A549 (cell line): ENCODE measurements at regions of chr6 and their contacts with region 1.

Region 1: DNA sequence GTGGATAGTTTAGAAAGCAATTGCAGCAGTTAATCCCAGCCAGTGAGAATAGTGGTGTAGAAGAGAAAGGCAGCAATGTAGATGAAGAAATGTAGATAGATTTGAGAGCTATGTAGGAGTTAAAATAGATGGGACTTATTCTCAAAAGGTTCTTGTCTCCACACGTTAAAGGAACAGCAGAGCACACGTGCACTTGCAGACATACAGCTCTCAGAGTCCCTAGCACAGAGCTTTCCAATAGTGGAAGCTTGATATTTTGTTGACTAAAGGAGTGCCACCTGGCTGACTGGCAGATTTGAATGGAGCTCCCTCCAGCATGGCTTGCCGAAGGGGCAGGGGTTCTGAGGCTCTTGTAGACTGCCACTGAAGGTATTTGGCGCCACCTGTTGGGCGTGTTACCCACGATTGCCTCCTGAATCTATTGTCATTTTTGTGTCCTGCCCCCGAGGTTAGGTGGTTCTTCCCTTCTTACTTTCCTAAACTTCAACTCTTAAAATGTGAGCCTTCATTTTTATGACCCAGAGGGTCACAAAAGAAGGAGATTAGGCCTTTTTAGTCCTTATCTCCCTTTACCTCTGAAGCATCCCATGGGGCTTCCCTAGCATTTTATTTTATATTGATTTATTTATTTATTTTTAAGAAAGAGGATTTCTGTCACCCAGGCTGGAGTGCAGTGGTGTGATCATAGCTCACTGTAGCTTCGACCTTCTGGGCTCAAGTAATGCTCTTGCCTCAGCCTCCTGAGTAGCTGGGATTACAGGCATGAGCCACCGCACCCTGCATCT is 16.4 kb downstream of the BRD2 start:
- DNase-seq: peak; percentile 52 to 86
- ATAC-seq: peak; percentile 75 to 83
- H3K4me3 ChIP-seq: no peak overlapping the region
- H3K27ac ChIP-seq: no peak overlapping the region
- H3K4me1 ChIP-seq: peaks cover 11% of the 10 kb centered on the region
- CTCF ChIP-seq: peak; percentile 87
- EP300 ChIP-seq: no peak
- POLR2A ChIP-seq: no peak
- RAD21 ChIP-seq: peak; percentile 84 to 85

Region 2: DNA sequence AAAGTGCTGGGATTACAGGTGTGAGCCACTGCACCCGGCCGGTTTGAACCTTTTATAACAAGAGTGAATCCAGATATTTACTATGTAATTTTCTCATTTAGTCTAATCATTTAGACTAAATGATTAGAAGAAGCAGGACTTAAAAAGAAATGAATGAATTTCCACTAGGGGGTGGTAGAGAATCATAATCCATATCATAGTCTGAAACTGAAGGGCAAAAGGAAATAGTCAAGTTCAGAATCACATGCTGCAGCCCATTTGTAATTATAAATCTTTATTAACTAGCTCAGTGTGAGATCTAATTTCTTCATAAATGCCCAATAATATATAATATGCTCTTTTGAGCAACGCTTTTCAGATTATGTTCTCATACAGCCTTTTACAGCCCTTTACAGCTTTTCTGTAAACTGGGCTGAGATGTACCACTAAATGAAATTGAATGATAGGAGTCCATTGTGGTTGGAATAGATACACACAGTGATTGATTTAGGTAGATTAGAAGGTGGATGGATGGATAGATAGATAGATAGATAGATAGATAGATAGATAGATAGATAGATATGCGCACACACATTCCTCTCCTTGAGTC is 99.0 kb before region 1 on chr6:
- CTCF ChIA-PET with region 1: interaction called, 37 read pairs
- POLR2A ChIA-PET with region 1: no interaction called
- DNase-seq: peak; percentile 39 to 66
- ATAC-seq: peak in 1 of 2 experiments; percentile 76; a peak in 3 of 6 replicates
- H3K4me3 ChIP-seq: no peak overlapping the region
- H3K27ac ChIP-seq: 0 out of 6 replicates have a peak overlapping the region, but pooled peaks of 1 of the 2 experiments have one; percentile 5
- H3K4me1 ChIP-seq: peaks cover 16% of the 10 kb centered on the region
- CTCF ChIP-seq: peak; percentile 66
- EP300 ChIP-seq: no peak
- POLR2A ChIP-seq: no peak
- RAD21 ChIP-seq: peak; percentile 80 to 82

Region 3: DNA sequence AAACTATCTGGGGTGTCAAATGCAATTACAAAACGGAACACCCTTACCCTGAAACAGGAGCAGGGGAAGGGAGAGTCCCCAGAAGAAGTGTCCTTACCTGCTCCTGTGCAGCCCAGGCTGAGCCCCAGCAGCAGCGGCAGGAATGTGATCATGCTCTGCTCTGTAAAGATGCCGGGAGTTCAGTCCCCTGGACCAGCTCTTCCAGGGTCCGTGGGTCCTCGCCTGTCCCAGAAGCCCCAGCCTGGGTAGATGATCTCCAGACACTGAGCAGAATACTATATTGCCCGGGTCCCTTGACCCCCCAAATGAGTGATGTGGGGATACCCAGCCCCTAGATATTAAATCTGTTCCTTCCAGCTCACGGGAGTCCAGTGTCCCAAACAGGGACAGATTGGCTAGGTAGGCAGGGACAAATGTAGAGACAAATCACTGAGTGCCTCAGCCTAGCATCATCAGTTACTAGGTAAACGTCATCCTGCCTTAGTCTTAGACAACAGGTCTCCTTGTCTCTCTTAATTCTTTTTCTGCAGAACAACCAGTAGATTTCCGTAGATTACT is 44.1 kb before region 1 on chr6 and contains the start of gene HLA-DMB:
- CTCF ChIA-PET with region 1: interaction called, 124 read pairs
- POLR2A ChIA-PET with region 1: no interaction called
- DNase-seq: peak; percentile 79 to 87
- ATAC-seq: peak; percentile 100
- H3K4me3 ChIP-seq: peak within 1 kb of the TSS; percentile 44
- H3K27ac ChIP-seq: peak within 1 kb of the TSS; percentile 35 to 73; a peak in 3 of 6 replicates
- H3K4me1 ChIP-seq: no peaks in the 10 kb centered on the region
- CTCF ChIP-seq: no peak
- EP300 ChIP-seq: no peak
- POLR2A ChIP-seq: no peak
- RAD21 ChIP-seq: no peak
- polyA plus RNA-seq, gene HLA-DMB: 14.3 and 21.6 TPM in 2 replicates

Region 4: GRCh38 chr6:32952817-32953739 is 31.7 kb before region 1 on chr6 and contains the start of gene HLA-DMA:
- CTCF ChIA-PET with region 1: interaction called, 40 read pairs
- POLR2A ChIA-PET with region 1: no interaction called
- DNase-seq: peak; percentile 49 to 93
- ATAC-seq: peak; percentile 88 to 99
- H3K4me3 ChIP-seq: no peak within 1 kb of the TSS
- H3K27ac ChIP-seq: no peak within 1 kb of the TSS
- H3K4me1 ChIP-seq: peaks cover 5% of the 10 kb centered on the region; the same call in 1 of the 3 replicates
- CTCF ChIP-seq: peak; percentile 50
- EP300 ChIP-seq: no peak
- POLR2A ChIP-seq: no peak
- RAD21 ChIP-seq: peak; percentile 24 to 28; a peak in 2 of 5 replicates
- polyA plus RNA-seq, gene HLA-DMA: 5.6 and 7.0 TPM in 2 replicates

Region 5: DNA sequence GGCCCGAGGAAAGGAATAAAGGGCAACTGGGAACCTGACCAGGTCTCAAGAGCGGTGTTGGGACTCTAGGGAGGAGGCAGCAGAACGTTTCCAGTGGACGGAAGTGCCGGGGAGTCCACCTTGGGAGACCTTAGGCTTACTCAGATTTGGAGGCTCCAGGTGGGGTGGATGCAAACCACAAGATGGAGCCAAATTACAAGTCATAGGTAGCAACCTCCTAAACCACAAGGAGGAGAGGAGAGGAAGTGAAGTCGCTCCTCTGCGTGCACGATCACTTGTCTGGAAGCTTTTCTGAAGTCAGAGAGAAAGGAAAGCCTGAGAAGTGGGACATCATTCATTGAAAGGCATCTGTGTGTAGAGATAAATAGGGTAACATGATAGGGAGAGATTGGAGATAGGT is 15.3 kb after region 1 on chr6:
- CTCF ChIA-PET with region 1: interaction called, 12 read pairs
- POLR2A ChIA-PET with region 1: no interaction called
- DNase-seq: peak in 1 of 2 experiments; percentile 46
- ATAC-seq: peak; percentile 71 to 72; a peak in 4 of 6 replicates
- H3K4me3 ChIP-seq: no peak overlapping the region
- H3K27ac ChIP-seq: no peak overlapping the region
- H3K4me1 ChIP-seq: no peaks in the 10 kb centered on the region
- CTCF ChIP-seq: peak; percentile 12; the same call in 1 of the 3 replicates
- EP300 ChIP-seq: no peak
- POLR2A ChIP-seq: no peak
- RAD21 ChIP-seq: peak; percentile 30 to 36; a peak in 3 of 5 replicates

Region 6: DNA sequence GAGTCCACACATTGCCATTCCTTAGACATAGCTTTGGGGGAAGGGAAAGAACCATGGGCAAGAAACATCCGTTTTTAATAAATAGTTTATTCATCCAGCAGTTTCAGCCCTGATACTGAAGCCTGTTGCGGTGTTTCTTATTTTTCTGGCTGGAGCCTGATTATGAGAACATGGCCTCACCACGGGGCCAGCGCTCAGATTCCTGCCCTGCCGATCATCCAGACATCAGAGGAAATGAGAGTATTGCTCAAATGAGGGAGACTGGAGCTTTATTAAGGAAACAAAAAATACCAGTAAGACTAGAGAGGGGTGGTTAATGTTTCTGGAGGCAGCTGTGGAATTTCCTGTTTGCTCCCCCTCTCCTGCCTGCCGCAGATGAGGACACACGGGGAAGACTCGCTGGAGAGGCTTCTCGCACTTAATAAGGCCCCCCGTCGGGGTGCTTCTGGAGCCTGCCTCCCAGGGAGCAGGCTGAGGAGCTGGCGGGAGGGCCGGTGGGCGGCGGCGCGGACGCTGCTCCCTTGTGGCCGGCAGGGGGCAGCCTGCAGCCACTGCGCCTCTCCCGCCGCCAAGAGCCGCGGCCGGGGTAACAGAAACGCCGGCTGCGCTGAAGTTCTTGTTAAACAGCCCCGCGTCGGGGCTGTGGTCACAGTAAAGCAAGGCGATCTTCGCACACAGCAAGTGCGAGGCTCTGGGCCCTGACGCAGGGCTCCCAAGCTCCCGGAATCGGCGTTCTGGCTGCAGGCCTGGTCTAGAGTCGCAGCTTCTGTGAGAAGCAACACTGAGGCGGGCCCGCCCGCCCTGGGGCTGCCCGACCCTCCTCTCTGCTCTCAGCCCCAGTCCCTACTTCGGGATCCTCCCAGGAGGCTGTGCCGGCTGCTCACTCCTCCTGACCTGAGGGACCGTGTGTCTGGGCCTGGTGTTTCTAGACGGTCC is 786.6 kb after region 1 on chr6:
- CTCF ChIA-PET with region 1: no interaction called
- POLR2A ChIA-PET with region 1: no interaction called
- DNase-seq: peak; percentile 49 to 69
- ATAC-seq: peak; percentile 76 to 83
- H3K4me3 ChIP-seq: no peak overlapping the region
- H3K27ac ChIP-seq: peak overlapping the region; percentile 41 to 80; a peak in 4 of 6 replicates
- H3K4me1 ChIP-seq: peaks cover 22% of the 10 kb centered on the region
- CTCF ChIP-seq: peak; percentile 85
- EP300 ChIP-seq: no peak
- POLR2A ChIP-seq: no peak
- RAD21 ChIP-seq: peak; percentile 67 to 87